Activated CD4-positive, alpha-beta T cell treated with anti-CD3 and anti-CD28 coated beads, Interleukin-2, amount 10 ng/mL, durations not matched to agents 24 days and 14 days (primary cell): ENCODE measurements at regions of chr10 and their contacts with region 1.

Region 1: GRCh38 chr10:29658984-29659965 is 24.5 kb upstream of the SVIL start:
- DNase-seq: peak; percentile 89
- H3K4me3 Mint-ChIP-seq: peak overlapping the region; percentile 56
- H3K27ac Mint-ChIP-seq: peak overlapping the region; percentile 67
- H3K4me1 Mint-ChIP-seq: peaks cover 18% of the 10 kb centered on the region
- H3K27me3 Mint-ChIP-seq: peaks cover 46% of the 10 kb centered on the region

Region 2: DNA sequence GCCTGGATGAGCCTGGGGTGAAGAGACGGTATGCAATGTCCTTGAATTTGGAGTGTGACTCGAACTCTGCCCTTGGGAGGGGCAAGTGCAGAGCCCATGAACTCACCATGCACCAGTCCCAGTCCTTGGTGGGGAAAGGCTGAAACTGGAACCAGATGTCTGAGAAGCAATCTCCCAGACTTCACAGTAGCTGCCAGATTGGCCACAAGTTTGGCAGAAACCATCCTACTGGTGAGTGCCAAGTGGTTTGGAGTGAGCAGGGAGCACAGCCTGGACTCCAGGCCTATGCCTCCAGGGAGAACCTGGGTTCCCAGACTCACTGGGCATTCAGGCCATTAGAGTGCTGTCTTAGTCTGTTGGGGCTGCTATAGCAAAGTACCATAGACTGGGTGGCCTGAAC is 470.0 kb before region 1 on chr10:
- intact Hi-C with region 1: no loop called
- DNase-seq: no peak
- H3K4me3 Mint-ChIP-seq: no peak overlapping the region
- H3K27ac Mint-ChIP-seq: no peak overlapping the region
- H3K4me1 Mint-ChIP-seq: no peaks in the 10 kb centered on the region
- H3K27me3 Mint-ChIP-seq: no peaks in the 10 kb centered on the region

Region 3: GRCh38 chr10:29199921-29200679 is 459.2 kb before region 1 on chr10:
- intact Hi-C with region 1: no loop called
- DNase-seq: no peak
- H3K4me3 Mint-ChIP-seq: no peak overlapping the region
- H3K27ac Mint-ChIP-seq: no peak overlapping the region
- H3K4me1 Mint-ChIP-seq: no peaks in the 10 kb centered on the region
- H3K27me3 Mint-ChIP-seq: no peaks in the 10 kb centered on the region

Region 4: GRCh38 chr10:29635711-29636144 is 23.5 kb before region 1 on chr10:
- intact Hi-C with region 1: loop called (anchors 1 kb)
- DNase-seq: no peak
- H3K4me3 Mint-ChIP-seq: peak overlapping the region; percentile 32
- H3K27ac Mint-ChIP-seq: no peak overlapping the region
- H3K4me1 Mint-ChIP-seq: peaks cover 29% of the 10 kb centered on the region
- H3K27me3 Mint-ChIP-seq: no peaks in the 10 kb centered on the region

Region 5: DNA sequence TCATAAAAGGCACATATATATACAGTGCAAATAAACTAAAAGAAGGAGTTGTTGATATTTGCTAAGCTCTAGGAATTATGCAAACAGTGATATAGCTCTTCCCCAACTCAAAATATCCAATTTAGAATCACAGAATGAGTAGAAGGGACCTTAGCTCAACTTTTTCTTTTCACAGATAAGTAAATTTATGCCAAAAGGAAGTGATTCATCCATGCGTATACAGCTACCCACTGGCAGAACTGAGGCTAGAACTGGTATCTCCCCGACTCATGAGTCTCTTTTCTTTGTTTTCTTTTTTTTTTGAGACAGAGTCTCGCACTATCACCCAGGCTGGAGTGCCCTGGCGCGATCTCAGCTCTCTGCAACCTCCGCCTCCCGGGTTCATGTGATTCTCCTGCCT is 29.7 kb after region 1 on chr10:
- intact Hi-C with region 1: loop called (anchors 1 kb)
- DNase-seq: no peak
- H3K4me3 Mint-ChIP-seq: no peak overlapping the region
- H3K27ac Mint-ChIP-seq: no peak overlapping the region
- H3K4me1 Mint-ChIP-seq: peaks cover 15% of the 10 kb centered on the region
- H3K27me3 Mint-ChIP-seq: peaks cover 3% of the 10 kb centered on the region